ENCODE measurements at regions of chr10 and their contacts with region 1.

Region 1: GRCh38 chr10:43361986-43362839 is 9.2 kb upstream of the FXYD4 start:
- DNase-seq: peak; percentile 98
- H3K4me3 Mint-ChIP-seq: peak overlapping the region; percentile 98
- H3K27ac Mint-ChIP-seq: peak overlapping the region; percentile 99
- H3K4me1 Mint-ChIP-seq: peaks cover 25% of the 10 kb centered on the region
- H3K27me3 Mint-ChIP-seq: peaks cover 1% of the 10 kb centered on the region

Region 2: GRCh38 chr10:42638055-42638820 is 724.0 kb before region 1 on chr10 and contains the start of gene ZNF33B:
- intact Hi-C with region 1: loop called (anchors 2 kb)
- DNase-seq: peak; percentile 94
- H3K4me3 Mint-ChIP-seq: peak within 1 kb of the TSS; percentile 98
- H3K27ac Mint-ChIP-seq: peak within 1 kb of the TSS; percentile 98
- H3K4me1 Mint-ChIP-seq: peaks cover 21% of the 10 kb centered on the region
- H3K27me3 Mint-ChIP-seq: peaks cover 1% of the 10 kb centered on the region
- total RNA-seq, gene ZNF33B: 7.6 and 7.9 TPM in 2 replicates

Region 3: DNA sequence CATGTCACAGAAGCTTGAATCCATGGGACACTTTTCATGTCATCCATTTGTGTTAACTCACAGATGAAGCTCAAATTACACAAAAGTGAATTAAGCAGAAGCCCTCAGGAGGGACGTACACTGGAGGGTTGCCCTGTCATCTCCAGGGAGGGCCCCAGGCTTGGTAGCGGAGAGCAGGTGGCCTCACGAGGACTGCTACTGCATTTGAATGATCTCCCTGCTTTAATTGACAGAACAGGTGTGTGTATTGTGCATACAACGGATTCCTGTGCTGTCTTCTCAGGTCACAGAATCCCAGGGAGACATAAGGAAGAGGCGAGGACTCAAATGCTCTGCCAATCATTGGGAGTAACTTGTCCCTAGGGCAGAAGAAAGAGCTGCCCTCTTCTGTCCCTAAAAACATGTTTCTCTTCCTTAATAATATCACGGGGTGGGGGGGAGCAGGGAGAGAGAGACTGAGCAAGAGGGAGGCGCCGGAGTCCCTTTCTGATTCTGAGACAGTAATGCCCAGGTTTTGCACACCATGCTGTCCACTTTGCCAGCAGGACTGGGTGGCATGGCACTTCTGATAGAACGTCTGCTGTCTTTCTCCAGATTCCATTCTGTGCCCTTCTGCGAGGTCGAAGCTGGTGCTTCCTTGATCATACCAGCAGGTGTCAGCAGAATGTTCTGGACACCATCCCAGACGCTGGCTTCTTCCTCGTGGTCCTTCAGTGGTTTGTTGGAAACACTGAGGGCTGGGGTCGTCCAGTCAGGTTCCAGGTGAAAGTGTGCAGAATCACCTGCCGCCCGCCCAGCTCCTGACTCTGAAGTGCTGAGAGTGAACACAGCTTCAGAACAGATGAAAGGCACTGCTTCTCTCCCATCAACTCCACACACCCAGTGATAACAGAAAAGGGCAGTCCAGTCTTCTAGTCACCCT is 69.2 kb before region 1 on chr10:
- intact Hi-C with region 1: loop called (anchors 1 kb)
- DNase-seq: no peak
- H3K4me3 Mint-ChIP-seq: peak overlapping the region; percentile 9
- H3K27ac Mint-ChIP-seq: peak overlapping the region; percentile 73
- H3K4me1 Mint-ChIP-seq: peaks cover 86% of the 10 kb centered on the region
- H3K27me3 Mint-ChIP-seq: peaks cover 9% of the 10 kb centered on the region

Region 4: DNA sequence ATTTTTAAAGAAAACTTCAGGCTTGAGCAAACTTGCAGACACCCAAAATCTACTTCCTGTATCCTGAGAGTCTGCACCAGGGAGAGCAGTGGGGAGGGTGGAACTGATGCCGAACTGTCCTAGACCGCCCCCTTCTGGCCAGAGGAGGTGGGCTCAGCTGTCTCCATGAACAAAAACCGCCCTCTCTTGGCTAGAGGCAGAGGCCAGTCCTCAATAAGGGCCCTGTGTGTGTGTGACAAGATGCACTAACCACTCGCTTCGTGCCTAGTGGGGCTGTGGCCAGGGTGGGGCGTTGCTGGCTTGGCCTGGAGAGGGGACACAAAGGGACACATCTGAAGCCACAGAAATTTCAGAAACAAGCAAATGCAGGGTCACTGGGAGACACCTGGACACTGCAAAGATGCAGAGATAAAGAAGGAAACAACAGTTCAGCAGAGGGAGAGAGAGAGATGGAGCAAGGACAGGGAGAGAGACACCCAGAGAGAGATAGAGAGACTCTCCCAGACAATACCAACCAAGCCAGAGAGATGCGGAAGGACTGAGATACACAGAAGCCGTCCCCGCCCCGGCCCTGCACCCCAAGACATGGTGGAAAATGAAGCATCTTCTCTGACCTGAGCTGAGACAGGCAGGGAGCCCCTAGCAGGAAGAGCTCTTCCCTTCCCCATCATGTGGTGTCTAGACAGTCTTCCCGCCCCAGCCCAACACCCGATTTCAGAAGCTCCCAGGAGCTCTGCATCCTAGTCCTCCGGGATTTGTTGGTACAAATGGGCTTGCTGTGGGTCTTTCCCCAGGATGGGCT is 13.5 kb before region 1 on chr10:
- intact Hi-C with region 1: loop called (anchors 1 kb)
- DNase-seq: peak; percentile 80
- H3K4me3 Mint-ChIP-seq: no peak overlapping the region
- H3K27ac Mint-ChIP-seq: peak overlapping the region; percentile 20
- H3K4me1 Mint-ChIP-seq: peaks cover 38% of the 10 kb centered on the region
- H3K27me3 Mint-ChIP-seq: peaks cover 16% of the 10 kb centered on the region

Region 5: DNA sequence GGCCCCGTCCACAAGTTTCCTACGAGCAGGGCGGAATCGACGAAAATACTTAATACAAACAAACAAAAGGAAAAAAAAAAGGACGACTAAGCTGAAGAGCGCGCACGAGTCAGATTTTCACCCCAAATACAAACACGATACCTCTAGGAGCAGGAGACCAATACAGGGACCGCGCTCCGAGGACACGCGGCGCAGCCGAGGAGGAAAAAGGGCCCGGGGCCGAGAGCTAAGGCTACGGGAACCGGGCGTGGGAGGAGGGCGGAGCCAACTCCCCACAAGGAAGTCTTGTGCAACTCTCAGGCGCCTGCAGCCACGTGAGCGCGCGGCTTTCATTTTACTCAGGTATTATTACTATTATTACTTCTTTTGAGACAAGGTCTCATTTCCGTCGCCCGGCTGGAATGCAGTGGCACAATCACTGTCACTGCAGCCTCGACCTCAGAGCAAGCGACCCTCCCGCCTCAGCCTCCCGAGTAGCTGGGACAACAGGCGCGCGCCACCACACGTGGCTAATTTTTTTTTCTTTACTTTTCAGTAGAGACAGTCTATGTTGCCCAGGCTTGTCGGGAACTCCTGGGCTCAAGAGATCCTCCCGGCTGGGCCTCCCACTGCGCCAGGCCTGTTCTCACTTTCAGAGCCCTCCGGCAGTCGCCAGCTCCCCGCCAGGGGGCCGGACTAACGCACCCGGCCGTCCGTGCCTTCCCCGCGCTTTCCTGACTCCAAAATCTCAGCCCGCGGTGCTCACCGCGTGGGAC is 45.5 kb after region 1 on chr10:
- intact Hi-C with region 1: loop called (anchors 1 kb)
- DNase-seq: peak; percentile 81
- H3K4me3 Mint-ChIP-seq: peak overlapping the region; percentile 99
- H3K27ac Mint-ChIP-seq: peak overlapping the region; percentile 100
- H3K4me1 Mint-ChIP-seq: peaks cover 42% of the 10 kb centered on the region
- H3K27me3 Mint-ChIP-seq: no peaks in the 10 kb centered on the region

Region 6: DNA sequence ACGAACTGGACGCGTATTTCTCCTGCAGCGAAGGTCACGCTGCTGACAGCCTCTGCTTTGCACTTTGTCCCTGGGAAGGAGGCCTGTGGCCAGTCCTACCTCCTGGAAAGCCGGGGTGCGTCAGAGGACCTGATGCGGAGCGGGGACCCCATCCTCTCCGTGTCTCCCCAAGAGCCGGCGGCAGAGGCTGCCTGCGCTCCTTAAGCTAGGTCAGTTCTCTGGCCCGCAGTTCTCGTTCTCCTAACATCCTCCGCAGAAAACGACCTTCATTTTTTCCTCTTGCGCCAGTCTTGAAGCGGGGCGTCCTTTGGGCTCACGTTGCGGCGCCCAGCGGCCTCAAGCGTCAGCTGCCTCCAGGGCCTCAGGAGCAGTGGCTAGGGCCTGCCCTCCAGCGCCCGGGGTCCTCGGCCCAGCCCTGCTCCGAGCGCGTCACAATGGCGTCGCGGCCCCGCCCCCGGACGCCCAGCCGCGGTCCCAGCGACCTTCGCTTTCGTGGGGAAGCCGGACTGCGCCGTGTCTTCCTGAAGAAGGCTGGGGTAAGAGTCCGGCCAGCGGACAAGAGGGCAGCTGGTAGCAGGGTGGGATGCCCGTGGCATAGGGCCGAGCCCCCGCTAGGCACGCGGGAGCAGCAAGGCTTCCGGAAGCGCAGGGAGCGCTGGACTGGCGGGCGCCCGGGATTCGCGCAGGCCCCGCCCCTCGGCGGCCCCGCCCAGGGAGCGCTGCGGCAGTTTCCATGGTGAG is 74.4 kb after region 1 on chr10 and contains the start of gene ZNF487:
- intact Hi-C with region 1: loop called (anchors 1 kb)
- DNase-seq: peak; percentile 91
- H3K4me3 Mint-ChIP-seq: peak within 1 kb of the TSS; percentile 88
- H3K27ac Mint-ChIP-seq: peak within 1 kb of the TSS; percentile 94
- H3K4me1 Mint-ChIP-seq: peaks cover 11% of the 10 kb centered on the region
- H3K27me3 Mint-ChIP-seq: no peaks in the 10 kb centered on the region
- total RNA-seq, gene ZNF487: 1.8 and 2.0 TPM in 2 replicates

Measured in activated T-helper 1 cell treated with anti-CD3 and anti-CD28 coated beads, Interleukin-12 subunit alpha, Interleukin-12 subunit beta, Interleukin-2, Interleukin-4 antibody, amounts not matched to agents 30 ng/mL and 10 ng/mL and 1 ng/mL, durations not matched to agents 14 hours and 24 hours and 36 hours (primary cell).